Activated CD4-positive, alpha-beta T cell treated with anti-CD3 and anti-CD28 coated beads for 36 hours (primary cell): ENCODE measurements at regions of chr2 and their contacts with region 1.

Region 1: GRCh38 chr2:24075915-24076848 is at the start of gene SF3B6:
- DNase-seq: peak; percentile 100
- ATAC-seq: peak; percentile 91
- H3K4me3 Mint-ChIP-seq: peak within 1 kb of the TSS; percentile 99
- H3K27ac Mint-ChIP-seq: peak within 1 kb of the TSS; percentile 99
- H3K4me1 Mint-ChIP-seq: peaks cover 43% of the 10 kb centered on the region
- H3K27me3 Mint-ChIP-seq: no peaks in the 10 kb centered on the region
- total RNA-seq, gene SF3B6: 128 to 143 TPM

Region 2: GRCh38 chr2:23824777-23825212 is 251.4 kb before region 1 on chr2:
- CTCF ChIA-PET with region 1: interaction called, 8 read pairs
- POLR2A ChIA-PET with region 1: interaction called, 5 read pairs
- intact Hi-C with region 1: loop called in 1 of 2 experiments (anchors 2 kb)
- DNase-seq: peak; percentile 17
- ATAC-seq: peak; percentile 60
- H3K4me3 Mint-ChIP-seq: no peak overlapping the region
- H3K27ac Mint-ChIP-seq: no peak overlapping the region
- H3K4me1 Mint-ChIP-seq: peaks cover 3% of the 10 kb centered on the region
- H3K27me3 Mint-ChIP-seq: no peaks in the 10 kb centered on the region

Region 3: GRCh38 chr2:23954325-23955014 is 121.7 kb before region 1 on chr2:
- CTCF ChIA-PET with region 1: no interaction called
- POLR2A ChIA-PET with region 1: no interaction called
- intact Hi-C with region 1: no loop called
- DNase-seq: no peak
- ATAC-seq: no peak
- H3K4me3 Mint-ChIP-seq: no peak overlapping the region
- H3K27ac Mint-ChIP-seq: no peak overlapping the region
- H3K4me1 Mint-ChIP-seq: peaks cover 9% of the 10 kb centered on the region
- H3K27me3 Mint-ChIP-seq: no peaks in the 10 kb centered on the region

Region 4: DNA sequence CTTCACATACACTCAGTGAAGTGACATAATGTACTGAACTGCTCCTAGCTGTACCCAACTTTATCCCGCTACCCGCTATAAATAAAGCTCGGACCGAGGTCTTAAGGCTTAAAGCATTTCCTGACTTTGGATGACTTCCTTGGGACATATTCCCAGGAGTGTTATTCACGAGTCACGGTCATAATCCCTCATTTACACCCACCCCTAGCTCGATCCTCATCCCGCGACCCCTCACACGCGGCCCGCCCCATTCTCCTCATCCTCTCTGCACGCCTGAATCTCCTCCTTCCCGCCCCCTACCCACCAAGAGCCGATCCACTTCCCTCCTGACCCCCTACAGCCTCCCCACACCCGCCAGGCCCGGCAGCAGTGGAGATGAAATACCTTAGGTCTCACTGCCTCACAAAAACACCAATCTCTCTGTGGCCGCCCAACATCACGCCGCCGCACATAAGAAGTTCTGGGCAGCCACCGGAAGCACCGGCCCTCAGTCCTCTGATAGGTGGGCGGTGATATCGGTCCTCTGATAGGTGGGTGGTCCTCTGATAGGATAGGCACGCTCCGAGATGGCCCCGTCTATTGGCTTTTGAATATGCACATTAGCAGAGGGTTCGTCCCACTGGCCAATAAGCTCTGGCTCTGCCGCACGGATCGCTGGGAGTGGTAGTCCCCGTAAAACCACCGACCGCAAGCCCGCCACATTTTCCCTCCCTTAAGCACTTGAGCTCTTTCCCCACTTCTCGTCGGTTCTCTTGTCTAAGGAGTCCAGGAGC is 29.1 kb before region 1 on chr2 and contains the start of gene WDCP:
- CTCF ChIA-PET with region 1: interaction called, 8 read pairs
- POLR2A ChIA-PET with region 1: interaction called, 34 read pairs
- intact Hi-C with region 1: loop called (anchors 1 kb)
- DNase-seq: peak; percentile 97
- ATAC-seq: peak; percentile 100
- H3K4me3 Mint-ChIP-seq: peak within 1 kb of the TSS; percentile 88
- H3K27ac Mint-ChIP-seq: peak within 1 kb of the TSS; percentile 91
- H3K4me1 Mint-ChIP-seq: peaks cover 25% of the 10 kb centered on the region
- H3K27me3 Mint-ChIP-seq: peaks cover 5% of the 10 kb centered on the region
- total RNA-seq, gene WDCP: 13.2 to 21.5 TPM

Region 5: DNA sequence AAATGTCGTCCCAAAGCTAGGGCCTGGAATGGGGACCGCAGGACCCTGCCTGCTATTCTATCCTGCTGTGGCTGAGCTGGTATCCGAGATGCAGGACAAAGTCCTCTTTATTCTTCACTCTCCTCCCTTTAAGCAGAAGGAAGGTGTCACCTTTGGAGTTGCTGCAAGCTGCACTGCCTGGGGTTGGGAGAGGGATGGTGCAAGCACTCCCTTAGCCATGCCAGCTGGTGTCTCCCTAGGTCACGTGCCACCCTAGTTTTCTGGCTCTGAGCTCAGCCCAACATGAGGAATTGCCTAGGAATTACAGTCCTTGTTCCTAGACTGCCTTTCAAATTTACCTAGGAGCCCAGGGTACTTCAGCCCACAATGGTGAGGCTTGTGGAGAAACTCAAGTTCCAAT is 77.3 kb after region 1 on chr2:
- CTCF ChIA-PET with region 1: no interaction called
- POLR2A ChIA-PET with region 1: no interaction called
- intact Hi-C with region 1: no loop called
- DNase-seq: no peak
- ATAC-seq: no peak
- H3K4me3 Mint-ChIP-seq: no peak overlapping the region
- H3K27ac Mint-ChIP-seq: no peak overlapping the region
- H3K4me1 Mint-ChIP-seq: no peaks in the 10 kb centered on the region
- H3K27me3 Mint-ChIP-seq: no peaks in the 10 kb centered on the region

Region 6: GRCh38 chr2:24360050-24360962 is 284.1 kb after region 1 on chr2 and contains the start of gene ITSN2:
- CTCF ChIA-PET with region 1: no interaction called
- POLR2A ChIA-PET with region 1: no interaction called
- intact Hi-C with region 1: loop called in 1 of 2 experiments (anchors 1 kb)
- DNase-seq: peak; percentile 90
- ATAC-seq: peak; percentile 89
- H3K4me3 Mint-ChIP-seq: peak within 1 kb of the TSS; percentile 84
- H3K27ac Mint-ChIP-seq: peak within 1 kb of the TSS; percentile 94
- H3K4me1 Mint-ChIP-seq: peaks cover 29% of the 10 kb centered on the region
- H3K27me3 Mint-ChIP-seq: no peaks in the 10 kb centered on the region
- total RNA-seq, gene ITSN2: 46.0 to 49.6 TPM